Pancreas (tissue), 10 donors: ENCODE measurements at regions of chr1 and their contacts with region 1.

Region 1: DNA sequence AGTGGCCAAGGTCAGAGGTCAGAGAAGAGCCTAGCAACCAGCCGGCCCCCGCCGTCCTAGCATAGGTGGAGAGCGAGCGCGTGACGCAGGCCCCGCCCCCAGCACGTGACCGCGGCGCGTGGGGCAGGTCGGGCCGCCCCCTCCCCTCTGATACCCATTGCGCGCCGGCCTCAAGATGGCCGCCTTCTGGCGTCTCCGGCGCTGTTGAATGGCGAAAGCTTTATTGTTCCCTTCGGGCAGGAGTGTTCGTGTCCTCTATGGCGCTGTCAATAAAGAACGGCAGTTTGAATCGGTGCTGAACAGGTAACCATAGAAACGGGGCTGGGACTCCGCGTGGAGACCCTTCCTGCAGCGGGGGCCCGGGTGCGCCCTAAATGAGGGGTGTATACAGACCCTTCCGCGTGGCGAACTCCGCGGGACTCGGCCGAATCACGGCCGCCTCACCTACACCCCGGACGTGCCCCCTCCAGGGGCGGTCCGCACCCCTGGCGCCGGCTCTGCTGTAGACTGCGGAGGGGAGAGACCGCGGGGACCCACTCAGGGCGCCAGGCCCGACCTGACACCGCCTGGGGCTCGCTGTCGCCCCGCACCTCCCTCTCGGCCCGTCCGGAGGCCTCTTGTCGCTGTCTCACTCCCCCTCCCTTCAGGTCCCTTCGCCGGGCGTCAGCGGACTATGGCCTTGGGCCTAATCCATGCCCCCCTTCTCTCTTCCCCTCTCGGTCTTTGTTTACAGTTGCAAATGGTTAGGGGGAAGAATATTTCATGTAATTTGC is at the start of gene ZBTB40:
- DNase-seq: peak; percentile 97 to 99 (median 98)
- ATAC-seq: peak; percentile 87 to 94 (median 91)
- H3K4me3 ChIP-seq: peak within 1 kb of the TSS; percentile 72 to 94 (median 88)
- H3K27ac ChIP-seq: peak within 1 kb of the TSS; percentile 94 to 99 (median 98)
- H3K4me1 ChIP-seq: peaks cover 12 to 52% (median 30%) of the 10 kb centered on the region in 3 donors
- H3K27me3 ChIP-seq: no peaks in the 10 kb centered on the region
- CTCF ChIP-seq: no peak
- total RNA-seq, gene ZBTB40: 6.2 to 16.0 (median 9.8) TPM

Region 2: GRCh38 chr1:22143065-22144036 is 308.5 kb before region 1 on chr1 and contains the start of gene WNT4:
- intact Hi-C with region 1: no loop called
- DNase-seq: peak; percentile 36 to 81 (median 60)
- ATAC-seq: peak; percentile 70 to 82 (median 76)
- H3K4me3 ChIP-seq: peak within 1 kb of the TSS; percentile 20 to 61 (median 38)
- H3K27ac ChIP-seq: peak within 1 kb of the TSS in 2 of 4 donors; percentile 46 to 52
- H3K4me1 ChIP-seq: peaks cover 0 to 4% (median 0%) of the 10 kb centered on the region in 3 donors
- H3K27me3 ChIP-seq: no peaks in the 10 kb centered on the region
- CTCF ChIP-seq: peak in 1 of 4 donors; percentile 7
- total RNA-seq, gene WNT4: 0.69 to 6.8 (median 3.0) TPM

Region 3: GRCh38 chr1:22500471-22500870 is 48.6 kb after region 1 on chr1:
- intact Hi-C with region 1: loop called in 1 of 3 experiments (anchors 10 kb)
- DNase-seq: peak in 4 of 6 donors; percentile 57 to 72 (median 67)
- ATAC-seq: peak; percentile 47 to 70 (median 64)
- H3K4me3 ChIP-seq: no peak overlapping the region
- H3K27ac ChIP-seq: peak overlapping the region in 2 of 4 donors; percentile 32 to 33
- H3K4me1 ChIP-seq: peaks cover 42 to 63% (median 56%) of the 10 kb centered on the region in 3 donors
- H3K27me3 ChIP-seq: no peaks in the 10 kb centered on the region
- CTCF ChIP-seq: no peak

Region 4: GRCh38 chr1:22527555-22528296 is 75.8 kb after region 1 on chr1:
- intact Hi-C with region 1: no loop called
- DNase-seq: peak in 1 of 6 donors; percentile 63
- ATAC-seq: peak; percentile 10 to 61 (median 53)
- H3K4me3 ChIP-seq: no peak overlapping the region
- H3K27ac ChIP-seq: peak overlapping the region in 2 of 4 donors; percentile 22 to 47
- H3K4me1 ChIP-seq: peaks cover 42 to 45% (median 44%) of the 10 kb centered on the region in 3 donors
- H3K27me3 ChIP-seq: no peaks in the 10 kb centered on the region
- CTCF ChIP-seq: no peak